Prostate gland (tissue), 2 donors: ENCODE measurements at regions of chr7 and their contacts with region 1.

Region 1: DNA sequence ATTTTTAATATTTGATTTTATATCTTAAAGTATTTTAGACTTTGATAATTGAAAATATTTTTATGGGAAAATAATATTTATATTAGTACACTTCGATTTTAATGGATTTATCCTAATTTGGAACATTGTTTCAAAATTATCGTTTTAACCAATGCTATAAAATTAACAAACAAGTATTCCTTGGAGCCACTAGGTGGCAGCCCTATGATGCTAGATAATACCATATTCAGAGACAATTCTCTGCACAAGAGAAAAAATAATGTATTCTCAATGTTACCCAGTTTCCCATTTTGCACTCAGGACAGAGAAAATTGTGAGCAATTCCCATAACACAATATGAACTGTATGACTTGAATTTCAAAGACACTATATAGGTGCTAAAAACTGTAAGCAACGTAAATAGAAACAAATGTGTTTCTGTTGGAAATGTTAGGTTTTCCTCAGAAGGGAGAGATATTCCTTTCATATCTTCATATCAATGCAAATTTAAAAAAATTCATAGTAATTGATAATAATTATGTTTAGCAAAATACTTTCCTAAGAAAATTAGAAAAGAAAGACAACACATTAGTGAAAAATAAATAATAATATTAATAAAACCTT is 237.8 kb downstream of the SEMA3E start:
- DNase-seq: peak; percentile 25
- H3K4me3 ChIP-seq: no peak overlapping the region
- H3K27ac ChIP-seq: no peak overlapping the region
- H3K4me1 ChIP-seq: no peaks in the 10 kb centered on the region
- H3K27me3 ChIP-seq: no peaks in the 10 kb centered on the region
- CTCF ChIP-seq: peak in 3 of 4 experiments; percentile 69 to 82 (median 77)
- POLR2A ChIP-seq: no peak

Region 2: GRCh38 chr7:83655951-83656556 is 245.0 kb after region 1 on chr7:
- intact Hi-C with region 1: loop called (anchors 2 kb)
- DNase-seq: peak; percentile 24
- H3K4me3 ChIP-seq: no peak overlapping the region
- H3K27ac ChIP-seq: no peak overlapping the region
- H3K4me1 ChIP-seq: no peaks in the 10 kb centered on the region
- H3K27me3 ChIP-seq: no peaks in the 10 kb centered on the region
- CTCF ChIP-seq: peak; percentile 48 to 87 (median 84)
- POLR2A ChIP-seq: no peak